Endothelial cell of umbilical vein (primary cell): ENCODE measurements at regions of chr4 and their contacts with region 1.

Region 1: GRCh38 chr4:123144616-123145015 is 222.2 kb upstream of the NUDT6 start:
- DNase-seq: no peak
- H3K4me3 ChIP-seq: no peak overlapping the region
- H3K27ac ChIP-seq: no peak overlapping the region
- H3K4me1 ChIP-seq: no peaks in the 10 kb centered on the region
- H3K27me3 ChIP-seq: no peaks in the 10 kb centered on the region
- CTCF ChIP-seq: no peak
- POLR2A ChIP-seq: no peak

Region 2: GRCh38 chr4:123043013-123043412 is 101.6 kb before region 1 on chr4:
- CTCF ChIA-PET with region 1: no interaction called
- POLR2A ChIA-PET with region 1: no interaction called
- dilution Hi-C with region 1: no loop called
- intact Hi-C with region 1: no loop called
- DNase-seq: no peak
- H3K4me3 ChIP-seq: no peak overlapping the region
- H3K27ac ChIP-seq: no peak overlapping the region
- H3K4me1 ChIP-seq: no peaks in the 10 kb centered on the region
- H3K27me3 ChIP-seq: no peaks in the 10 kb centered on the region
- CTCF ChIP-seq: no peak
- POLR2A ChIP-seq: no peak

Region 3: GRCh38 chr4:123158576-123158975 is 14.0 kb after region 1 on chr4:
- CTCF ChIA-PET with region 1: interaction called, 12 read pairs
- POLR2A ChIA-PET with region 1: no interaction called
- dilution Hi-C with region 1: no loop called
- intact Hi-C with region 1: no loop called
- DNase-seq: peak; percentile 8
- H3K4me3 ChIP-seq: no peak overlapping the region
- H3K27ac ChIP-seq: no peak overlapping the region
- H3K4me1 ChIP-seq: no peaks in the 10 kb centered on the region
- H3K27me3 ChIP-seq: no peaks in the 10 kb centered on the region
- CTCF ChIP-seq: no peak
- POLR2A ChIP-seq: no peak